Endothelial cell of umbilical vein (primary cell): ENCODE measurements at regions of chr12 and their contacts with region 1.

Region 1: GRCh38 chr12:108514973-108515814 is at the start of gene FICD:
- DNase-seq: peak; percentile 99
- H3K4me3 ChIP-seq: peak within 1 kb of the TSS; percentile 63 to 98 (median 73)
- H3K27ac ChIP-seq: peak within 1 kb of the TSS; percentile 52
- H3K4me1 ChIP-seq: peaks cover 7% of the 10 kb centered on the region
- H3K27me3 ChIP-seq: no peaks in the 10 kb centered on the region
- CTCF ChIP-seq: no peak
- POLR2A ChIP-seq: peak; percentile 50
- total RNA-seq, gene FICD: 6.0 and 6.1 TPM in 2 replicates

Region 2: GRCh38 chr12:107748472-107748871 is 766.7 kb before region 1 on chr12:
- CTCF ChIA-PET with region 1: no interaction called
- POLR2A ChIA-PET with region 1: no interaction called
- dilution Hi-C with region 1: no loop called
- intact Hi-C with region 1: loop called (anchors 5 kb)
- DNase-seq: peak; percentile 84
- H3K4me3 ChIP-seq: peak overlapping the region in 1 of 3 experiments; percentile 42
- H3K27ac ChIP-seq: peak overlapping the region; percentile 83
- H3K4me1 ChIP-seq: peaks cover 47% of the 10 kb centered on the region
- H3K27me3 ChIP-seq: no peaks in the 10 kb centered on the region
- CTCF ChIP-seq: no peak
- POLR2A ChIP-seq: no peak

Region 3: DNA sequence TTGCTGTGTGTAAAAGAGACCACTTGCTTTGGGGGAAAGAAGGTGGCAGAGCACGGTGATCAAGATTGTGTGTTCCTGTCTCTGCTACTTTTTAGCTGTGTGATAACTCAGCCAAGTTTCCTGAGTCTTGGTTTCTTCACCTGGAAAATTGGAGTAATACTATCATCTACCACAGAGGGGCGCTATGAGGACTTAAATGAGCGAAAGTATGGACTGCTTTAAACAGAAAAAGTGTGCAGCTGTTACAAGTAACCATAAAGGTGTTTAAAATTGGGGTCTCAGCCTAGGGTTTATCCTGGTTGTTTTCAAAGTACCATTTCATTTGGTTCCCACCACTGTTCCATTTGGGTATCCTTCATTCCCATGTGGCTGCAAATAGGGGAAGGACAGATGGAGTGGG is 452.0 kb before region 1 on chr12:
- CTCF ChIA-PET with region 1: interaction called, 12 read pairs
- POLR2A ChIA-PET with region 1: no interaction called
- dilution Hi-C with region 1: no loop called
- intact Hi-C with region 1: loop called (anchors 1 kb)
- DNase-seq: peak; percentile 36
- H3K4me3 ChIP-seq: no peak overlapping the region
- H3K27ac ChIP-seq: no peak overlapping the region
- H3K4me1 ChIP-seq: no peaks in the 10 kb centered on the region
- H3K27me3 ChIP-seq: no peaks in the 10 kb centered on the region
- CTCF ChIP-seq: peak; percentile 37
- POLR2A ChIP-seq: no peak

Region 4: DNA sequence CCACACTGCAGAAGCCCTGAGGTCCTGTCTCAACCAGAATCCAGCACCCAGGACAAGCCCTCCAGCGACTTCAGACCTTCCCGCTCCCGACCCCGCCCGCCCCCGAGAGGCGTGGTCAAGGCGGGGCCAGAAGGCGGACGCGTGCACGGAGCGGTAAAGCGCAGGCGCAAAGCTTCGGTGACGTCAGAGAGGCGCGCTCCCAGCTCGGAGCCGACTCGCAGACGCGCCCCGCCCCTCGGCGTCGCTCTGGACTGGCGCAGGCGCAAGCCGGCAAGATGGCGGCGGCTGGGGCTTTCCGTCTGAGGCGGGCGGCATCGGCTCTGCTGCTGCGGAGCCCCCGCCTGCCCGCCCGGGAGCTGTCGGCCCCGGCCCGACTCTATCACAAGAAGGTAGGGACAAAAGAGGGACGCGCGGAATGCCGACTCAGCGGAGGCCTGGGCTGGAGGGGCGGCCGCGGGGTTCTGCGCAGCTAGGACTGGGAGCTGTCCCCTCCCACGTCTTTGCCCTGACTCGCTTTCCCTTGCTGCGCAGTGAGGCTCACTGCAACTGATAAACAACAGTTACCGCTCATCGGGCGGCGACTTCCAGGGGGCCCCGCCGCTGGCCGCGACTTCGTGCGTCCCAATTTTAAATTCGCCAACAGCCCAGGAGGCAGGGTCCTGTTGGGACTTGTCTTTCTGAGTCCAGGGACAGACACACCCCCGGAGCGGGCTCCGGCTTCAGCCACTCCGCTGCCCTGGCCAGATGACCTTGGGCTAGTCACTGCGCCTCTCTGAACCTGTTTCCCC is 47.3 kb after region 1 on chr12 and contains the start of gene ISCU:
- CTCF ChIA-PET with region 1: no interaction called
- POLR2A ChIA-PET with region 1: no interaction called
- dilution Hi-C with region 1: no loop called
- intact Hi-C with region 1: loop called (anchors 1 kb)
- DNase-seq: peak; percentile 96
- H3K4me3 ChIP-seq: peak within 1 kb of the TSS; percentile 78 to 95 (median 86)
- H3K27ac ChIP-seq: peak within 1 kb of the TSS; percentile 83
- H3K4me1 ChIP-seq: peaks cover 34% of the 10 kb centered on the region
- H3K27me3 ChIP-seq: no peaks in the 10 kb centered on the region
- CTCF ChIP-seq: no peak
- POLR2A ChIP-seq: peak; percentile 94
- total RNA-seq, gene ISCU: 74.8 and 75.0 TPM in 2 replicates

Region 5: DNA sequence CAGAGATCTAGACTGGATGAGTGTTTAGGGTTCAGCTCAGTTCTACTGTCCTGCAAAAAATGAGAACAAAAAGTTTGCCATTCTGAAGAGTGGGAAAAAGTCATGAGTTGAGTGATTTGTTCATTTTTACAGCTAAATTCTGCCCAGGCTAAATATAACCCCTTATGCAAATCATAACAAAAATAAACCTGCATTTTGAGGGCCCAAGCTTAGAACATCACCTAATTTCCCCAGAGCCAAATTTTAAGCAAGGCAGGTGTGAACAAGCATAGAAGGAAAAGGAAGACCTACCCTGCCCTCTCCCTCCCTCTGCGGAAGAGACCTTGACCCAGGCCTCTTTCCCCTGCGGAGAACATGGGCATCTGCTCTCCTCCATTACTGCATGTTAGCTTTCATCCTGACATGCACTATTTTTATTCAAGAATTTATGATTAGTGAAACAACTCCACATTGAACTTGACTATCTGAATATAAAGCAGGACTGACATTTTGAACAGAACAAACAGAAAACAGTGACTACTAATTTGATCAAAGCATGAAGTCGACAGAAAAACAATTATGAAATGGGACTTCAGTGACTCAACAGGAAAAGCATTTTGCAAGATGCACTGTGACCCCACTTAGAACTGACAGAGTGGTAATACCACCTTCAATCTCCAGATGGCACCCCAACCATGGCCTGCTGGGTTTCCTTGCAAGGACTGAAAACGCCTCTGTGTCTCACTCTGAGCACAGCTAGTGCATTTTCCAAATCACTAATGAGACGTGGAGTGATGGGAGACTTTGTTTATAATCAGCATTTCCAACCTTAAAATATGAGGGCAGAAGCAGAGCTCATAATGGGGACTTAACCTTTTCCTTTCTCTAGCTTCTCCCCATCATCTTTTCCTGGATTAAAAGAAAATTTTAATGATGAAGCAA is 149.4 kb after region 1 on chr12:
- CTCF ChIA-PET with region 1: no interaction called
- POLR2A ChIA-PET with region 1: no interaction called
- dilution Hi-C with region 1: no loop called
- intact Hi-C with region 1: no loop called
- DNase-seq: peak; percentile 99
- H3K4me3 ChIP-seq: peak overlapping the region in 1 of 3 experiments; percentile 45
- H3K27ac ChIP-seq: peak overlapping the region; percentile 82
- H3K4me1 ChIP-seq: peaks cover 20% of the 10 kb centered on the region
- H3K27me3 ChIP-seq: no peaks in the 10 kb centered on the region
- CTCF ChIP-seq: peak; percentile 84 to 93
- POLR2A ChIP-seq: no peak

Region 6: DNA sequence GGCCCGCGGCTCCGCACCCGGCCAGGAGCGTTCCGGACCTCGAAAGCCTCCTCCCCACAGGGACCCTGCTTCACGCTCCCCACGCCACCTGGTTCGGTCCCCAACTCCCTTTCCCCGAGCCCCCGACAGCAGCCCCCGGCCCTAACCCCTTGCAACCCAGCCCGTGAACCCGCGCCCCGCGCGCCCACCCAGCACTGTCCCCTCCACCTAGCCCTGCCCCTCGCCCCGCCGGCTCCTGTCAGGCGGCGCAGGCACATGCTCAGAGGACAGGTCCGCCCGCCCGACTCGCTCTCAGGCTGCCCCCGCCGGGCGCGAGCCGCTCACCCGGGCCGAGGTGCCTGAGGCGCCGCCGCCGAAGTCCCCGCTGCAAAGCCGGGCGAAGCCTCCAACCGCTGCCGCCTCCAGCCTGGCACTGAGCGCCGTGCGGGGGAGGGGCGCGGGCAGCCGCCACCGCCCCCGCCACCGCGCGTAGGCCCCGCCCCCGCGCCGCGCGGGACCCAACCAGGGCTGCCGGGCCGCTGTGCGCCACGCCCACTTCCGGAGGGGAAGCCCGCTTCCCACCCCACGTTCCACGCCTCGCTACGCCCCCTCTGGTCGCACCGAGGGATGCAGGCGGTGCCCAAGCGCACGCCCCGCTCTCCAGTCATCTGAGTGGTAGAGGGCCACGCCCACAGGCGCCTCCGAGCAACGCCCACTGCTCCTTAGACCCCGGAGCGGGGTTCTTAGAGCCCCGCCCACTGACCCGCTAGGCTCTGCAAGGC is 216.1 kb after region 1 on chr12 and contains the start of gene CORO1C:
- CTCF ChIA-PET with region 1: no interaction called
- POLR2A ChIA-PET with region 1: no interaction called
- dilution Hi-C with region 1: no loop called
- intact Hi-C with region 1: loop called (anchors 2 kb)
- DNase-seq: peak; percentile 99
- H3K4me3 ChIP-seq: peak within 1 kb of the TSS; percentile 57 to 91 (median 76)
- H3K27ac ChIP-seq: peak within 1 kb of the TSS; percentile 92
- H3K4me1 ChIP-seq: peaks cover 29% of the 10 kb centered on the region
- H3K27me3 ChIP-seq: no peaks in the 10 kb centered on the region
- CTCF ChIP-seq: peak; percentile 89 to 95
- POLR2A ChIP-seq: peak; percentile 93
- total RNA-seq, gene CORO1C: 212 and 240 TPM in 2 replicates

Region 7: GRCh38 chr12:109093022-109093918 is 578.1 kb after region 1 on chr12 and contains the start of gene ALKBH2:
- CTCF ChIA-PET with region 1: no interaction called
- POLR2A ChIA-PET with region 1: no interaction called
- dilution Hi-C with region 1: no loop called
- intact Hi-C with region 1: loop called (anchors 2 kb)
- DNase-seq: peak; percentile 89
- H3K4me3 ChIP-seq: peak within 1 kb of the TSS in 2 of 3 experiments; percentile 33 to 41
- H3K27ac ChIP-seq: peak within 1 kb of the TSS; percentile 43
- H3K4me1 ChIP-seq: peaks cover 7% of the 10 kb centered on the region
- H3K27me3 ChIP-seq: no peaks in the 10 kb centered on the region
- CTCF ChIP-seq: peak; percentile 99 to 100
- POLR2A ChIP-seq: peak; percentile 67
- total RNA-seq, gene ALKBH2: 5.4 TPM in 2 replicates

Region 8: DNA sequence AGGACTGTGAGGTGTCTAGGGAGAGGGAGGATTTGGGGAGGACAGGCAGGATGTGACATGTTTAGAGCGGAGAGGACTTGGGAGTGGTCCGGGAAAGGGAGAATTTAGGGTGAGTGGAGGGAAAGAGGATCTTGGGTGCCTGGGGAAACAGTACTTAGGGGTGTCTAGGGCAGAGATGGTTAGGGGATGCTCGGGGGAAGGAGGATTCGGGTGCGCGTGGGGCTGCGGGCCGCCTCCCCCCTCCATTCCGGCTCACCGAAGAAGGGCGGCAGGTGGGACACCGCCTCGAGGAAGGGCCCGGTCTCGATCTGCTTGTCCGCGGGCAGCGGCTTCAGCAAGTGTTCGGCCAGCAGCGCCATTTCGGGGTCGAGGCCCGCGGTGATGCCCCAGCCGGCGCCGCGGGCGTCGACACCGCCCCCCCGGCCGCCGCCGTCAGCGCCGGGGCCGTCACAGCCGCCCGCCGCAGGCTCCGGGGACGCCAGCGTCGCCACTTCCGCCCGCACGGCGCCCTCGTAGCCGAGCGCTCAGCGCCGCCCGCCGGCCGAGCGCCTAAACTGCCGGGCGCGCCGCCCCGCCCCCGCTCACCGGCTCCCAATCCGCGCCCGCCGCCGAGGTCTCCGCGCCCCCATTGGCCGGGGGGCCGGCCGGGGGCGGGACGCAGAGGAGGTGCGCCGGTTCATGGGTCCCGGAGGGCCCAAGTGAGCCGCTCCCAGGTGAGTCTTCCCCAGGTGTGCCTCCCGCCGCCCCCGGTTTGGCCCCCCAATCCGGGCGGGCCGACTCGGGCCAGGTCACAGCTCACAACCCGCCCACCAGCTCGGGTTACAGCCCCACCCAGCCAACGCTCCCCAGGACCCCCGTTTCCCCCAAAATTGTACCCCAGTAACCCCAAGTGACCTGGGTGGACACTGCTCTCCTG is 1365.1 kb after region 1 on chr12 and contains the start of gene GLTP:
- CTCF ChIA-PET with region 1: no interaction called
- POLR2A ChIA-PET with region 1: no interaction called
- dilution Hi-C with region 1: no loop called
- intact Hi-C with region 1: no loop called
- DNase-seq: peak; percentile 80
- H3K4me3 ChIP-seq: peak within 1 kb of the TSS; percentile 50 to 79 (median 76)
- H3K27ac ChIP-seq: peak within 1 kb of the TSS; percentile 40
- H3K4me1 ChIP-seq: peaks cover 17% of the 10 kb centered on the region
- H3K27me3 ChIP-seq: no peaks in the 10 kb centered on the region
- CTCF ChIP-seq: peak; percentile 38 to 68
- POLR2A ChIP-seq: peak; percentile 77
- total RNA-seq, gene GLTP: 46.6 and 48.0 TPM in 2 replicates